WTC11 (cell line): ENCODE measurements at regions of chr1 and their contacts with region 1.

Region 1: GRCh38 chr1:54273092-54273794 is 73.3 kb downstream of the MRPL37 start:
- DNase-seq: peak; percentile 52
- ATAC-seq: peak; percentile 67
- H3K4me3 Mint-ChIP-seq: no peak overlapping the region
- H3K27ac Mint-ChIP-seq: peak overlapping the region; percentile 75
- H3K4me1 Mint-ChIP-seq: peaks cover 49% of the 10 kb centered on the region
- H3K27me3 Mint-ChIP-seq: no peaks in the 10 kb centered on the region
- CTCF ChIP-seq: no peak

Region 2: DNA sequence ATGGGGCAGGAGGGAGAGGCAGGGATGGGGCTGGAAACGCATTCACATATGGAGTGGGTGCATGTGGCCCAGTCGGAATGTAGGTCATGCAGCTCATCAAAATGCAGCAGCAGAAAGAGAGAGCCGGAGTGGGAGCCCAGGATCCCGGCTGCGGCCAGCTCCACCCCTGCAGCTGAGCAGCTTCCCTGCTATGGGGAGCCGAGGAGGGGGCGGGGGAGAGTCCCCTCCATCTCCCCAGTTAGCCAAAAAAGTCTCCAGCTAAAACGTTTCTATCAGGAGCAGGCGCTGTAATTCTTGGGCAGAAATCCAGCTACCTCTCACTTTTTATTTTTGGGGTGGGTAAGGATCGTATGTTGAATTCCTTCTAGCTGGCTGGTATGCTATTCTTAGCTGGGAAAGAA is 33.6 kb before region 1 on chr1:
- CTCF ChIA-PET with region 1: no interaction called
- POLR2A ChIA-PET with region 1: no interaction called
- DNase-seq: no peak
- ATAC-seq: no peak
- H3K4me3 Mint-ChIP-seq: no peak overlapping the region
- H3K27ac Mint-ChIP-seq: no peak overlapping the region
- H3K4me1 Mint-ChIP-seq: no peaks in the 10 kb centered on the region
- H3K27me3 Mint-ChIP-seq: no peaks in the 10 kb centered on the region
- CTCF ChIP-seq: no peak

Region 3: DNA sequence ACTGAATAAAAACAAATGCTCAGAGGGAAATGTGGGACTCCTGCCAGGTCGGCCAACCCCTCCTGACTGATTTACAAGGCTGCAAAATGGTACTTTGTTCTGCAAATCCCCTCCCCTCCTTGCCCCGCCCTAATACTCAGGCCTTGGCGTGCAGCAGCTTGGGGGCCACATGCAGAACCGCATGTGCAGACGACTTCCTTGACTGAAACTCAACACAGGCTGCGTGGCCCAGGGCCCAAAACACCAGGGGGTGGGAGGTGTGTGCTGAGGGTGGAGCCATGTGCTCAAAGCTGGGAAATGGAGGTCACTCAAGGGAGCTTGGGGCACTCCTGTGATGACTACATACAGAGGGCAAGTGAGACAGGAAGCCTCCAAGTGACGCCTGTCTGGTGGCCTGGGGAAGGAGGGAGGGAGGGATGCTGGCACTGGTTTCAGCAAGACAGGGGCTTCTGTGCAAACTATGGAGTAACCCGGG is 14.0 kb after region 1 on chr1:
- CTCF ChIA-PET with region 1: interaction called, 20 read pairs
- POLR2A ChIA-PET with region 1: interaction called, 3 read pairs
- DNase-seq: peak; percentile 40
- ATAC-seq: peak; percentile 23
- H3K4me3 Mint-ChIP-seq: no peak overlapping the region
- H3K27ac Mint-ChIP-seq: peak overlapping the region; percentile 85
- H3K4me1 Mint-ChIP-seq: peaks cover 85% of the 10 kb centered on the region
- H3K27me3 Mint-ChIP-seq: no peaks in the 10 kb centered on the region
- CTCF ChIP-seq: no peak

Region 4: DNA sequence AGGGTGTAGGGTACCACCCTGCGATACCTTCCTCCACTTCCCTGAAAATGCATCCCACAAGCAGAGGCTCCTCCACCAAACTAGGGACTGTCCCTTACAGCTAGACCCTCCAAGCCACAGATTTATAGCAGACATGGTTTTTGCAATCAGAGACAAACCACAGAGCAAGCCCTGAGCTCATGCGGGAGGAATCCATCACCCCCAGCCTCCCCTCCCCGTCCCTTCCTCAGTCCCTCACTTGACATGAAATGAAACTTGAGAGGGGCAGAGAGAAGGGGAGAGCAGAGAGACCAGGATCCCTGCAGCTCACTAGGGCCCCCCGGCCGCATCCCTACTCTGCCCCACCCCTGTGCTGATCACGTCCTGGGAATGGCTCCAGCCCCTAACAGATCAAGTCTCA is 21.6 kb after region 1 on chr1:
- CTCF ChIA-PET with region 1: interaction called, 12 read pairs
- POLR2A ChIA-PET with region 1: interaction called, 3 read pairs
- DNase-seq: no peak
- ATAC-seq: no peak
- H3K4me3 Mint-ChIP-seq: no peak overlapping the region
- H3K27ac Mint-ChIP-seq: no peak overlapping the region
- H3K4me1 Mint-ChIP-seq: peaks cover 86% of the 10 kb centered on the region
- H3K27me3 Mint-ChIP-seq: no peaks in the 10 kb centered on the region
- CTCF ChIP-seq: no peak

Region 5: GRCh38 chr1:54488779-54489626 is 215.8 kb after region 1 on chr1:
- CTCF ChIA-PET with region 1: interaction called, 18 read pairs
- POLR2A ChIA-PET with region 1: interaction called, 5 read pairs
- DNase-seq: peak; percentile 91
- ATAC-seq: peak; percentile 49
- H3K4me3 Mint-ChIP-seq: peak overlapping the region; percentile 81
- H3K27ac Mint-ChIP-seq: peak overlapping the region; percentile 86
- H3K4me1 Mint-ChIP-seq: peaks cover 32% of the 10 kb centered on the region
- H3K27me3 Mint-ChIP-seq: peaks cover 13% of the 10 kb centered on the region
- CTCF ChIP-seq: peak; percentile 95